ENCODE measurements at regions of chr12 and their contacts with region 1.

Region 1: GRCh38 chr12:113424915-113425823 is 3.0 kb downstream of the SDSL start:
- DNase-seq: peak; percentile 45 to 71
- ATAC-seq: peak in 3 of 4 donors; percentile 53 to 80 (median 70)
- H3K4me3 ChIP-seq: no peak overlapping the region
- H3K27ac ChIP-seq: no peak overlapping the region
- H3K4me1 ChIP-seq: no peaks in the 10 kb centered on the region
- H3K27me3 ChIP-seq: no peaks in the 10 kb centered on the region
- CTCF ChIP-seq: peak; percentile 78

Region 2: GRCh38 chr12:113190761-113191160 is 234.4 kb before region 1 on chr12:
- intact Hi-C with region 1: loop called in 1 of 2 experiments (anchors 5 kb)
- DNase-seq: no peak
- ATAC-seq: peak in 1 of 4 donors; percentile 23
- H3K4me3 ChIP-seq: no peak overlapping the region
- H3K27ac ChIP-seq: no peak overlapping the region
- H3K4me1 ChIP-seq: peaks cover 22% of the 10 kb centered on the region
- H3K27me3 ChIP-seq: no peaks in the 10 kb centered on the region
- CTCF ChIP-seq: no peak

Region 3: DNA sequence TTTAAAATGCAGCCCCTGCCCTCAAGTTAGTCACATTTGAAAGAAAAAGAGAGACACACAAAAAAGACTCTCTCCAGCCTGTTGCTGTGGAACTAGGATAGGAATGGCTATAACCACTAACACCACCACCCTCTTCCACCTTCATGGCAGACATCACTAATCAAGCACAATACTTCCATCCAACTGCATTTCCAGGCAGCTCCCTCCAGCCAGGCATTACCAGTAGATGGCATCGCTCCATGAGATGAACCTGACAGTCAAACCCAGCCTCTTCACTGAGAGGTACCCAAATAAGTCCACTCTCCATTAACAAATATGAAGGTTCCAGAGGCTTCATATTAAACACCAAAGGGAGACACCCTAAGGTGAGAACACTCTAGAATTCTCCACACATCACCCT is 114.7 kb before region 1 on chr12:
- intact Hi-C with region 1: loop called (anchors 1 to 5 kb)
- DNase-seq: no peak
- ATAC-seq: no peak
- H3K4me3 ChIP-seq: no peak overlapping the region
- H3K27ac ChIP-seq: no peak overlapping the region
- H3K4me1 ChIP-seq: peaks cover 4% of the 10 kb centered on the region
- H3K27me3 ChIP-seq: no peaks in the 10 kb centered on the region
- CTCF ChIP-seq: no peak

Region 4: GRCh38 chr12:113334786-113335540 is 90.2 kb before region 1 on chr12 and contains the start of gene SLC8B1:
- intact Hi-C with region 1: loop called in 1 of 2 experiments (anchors 5 kb)
- DNase-seq: peak; percentile 91 to 94
- ATAC-seq: peak; percentile 100
- H3K4me3 ChIP-seq: peak within 1 kb of the TSS; percentile 88
- H3K27ac ChIP-seq: peak within 1 kb of the TSS; percentile 78
- H3K4me1 ChIP-seq: peaks cover 22% of the 10 kb centered on the region
- H3K27me3 ChIP-seq: no peaks in the 10 kb centered on the region
- CTCF ChIP-seq: no peak
- total RNA-seq, gene SLC8B1: 7.6 to 10.3 (median 9.5) TPM

Region 5: DNA sequence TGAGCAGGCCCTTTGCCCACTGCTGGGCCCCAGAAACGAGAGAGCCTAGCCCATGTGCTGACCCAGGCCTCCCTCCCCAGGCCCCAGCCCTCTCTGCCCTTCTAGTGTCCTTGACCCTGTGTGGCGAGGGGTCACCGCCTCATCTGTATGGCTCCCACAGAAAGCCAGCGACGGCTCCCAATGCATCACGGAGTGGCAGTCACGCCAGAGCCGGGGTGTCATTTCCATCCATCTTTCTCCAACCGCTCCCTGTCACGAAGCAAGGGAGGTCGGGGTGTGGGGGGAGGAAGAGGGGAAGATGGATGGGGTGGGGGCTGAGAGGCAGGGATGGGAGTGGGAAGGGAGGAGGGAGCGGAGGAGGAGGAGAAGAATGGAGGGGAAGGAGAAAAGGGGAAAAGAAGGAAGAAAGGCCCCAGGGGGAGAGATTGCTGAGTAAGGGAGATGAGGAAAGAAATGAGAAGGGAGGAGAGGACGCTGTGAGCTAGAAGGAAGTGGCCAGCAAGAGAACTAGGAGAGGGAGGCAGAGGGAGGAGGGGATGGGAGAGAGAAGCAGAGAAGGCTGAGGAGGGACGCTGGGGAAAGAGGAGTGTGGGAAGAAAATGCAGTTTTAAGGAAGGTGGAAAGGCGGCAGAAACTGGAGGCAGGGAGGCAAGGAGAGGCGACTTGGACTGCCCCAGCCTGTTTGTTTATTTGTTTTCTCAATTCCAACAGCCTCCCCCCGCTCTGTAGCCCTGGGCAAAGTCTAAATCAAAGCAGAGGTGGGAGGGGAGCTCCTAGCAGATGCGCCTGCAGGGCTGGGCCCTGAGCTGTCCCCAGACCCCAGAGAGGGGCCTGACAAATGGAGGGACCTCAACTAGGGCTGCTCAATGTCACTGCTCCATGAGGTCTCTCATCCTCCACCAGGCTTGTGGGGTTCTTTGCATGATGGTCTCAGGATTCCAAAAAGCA is 122.0 kb after region 1 on chr12:
- intact Hi-C with region 1: no loop called
- DNase-seq: no peak
- ATAC-seq: no peak
- H3K4me3 ChIP-seq: no peak overlapping the region
- H3K27ac ChIP-seq: no peak overlapping the region
- H3K4me1 ChIP-seq: no peaks in the 10 kb centered on the region
- H3K27me3 ChIP-seq: peaks cover 0 to 6% (median 3%) of the 10 kb centered on the region in 3 donors
- CTCF ChIP-seq: no peak

Measured in psoas muscle (tissue), 8 donors.